IMR-90 (cell line): ENCODE measurements at regions of chr7 and their contacts with region 1.

Region 1: DNA sequence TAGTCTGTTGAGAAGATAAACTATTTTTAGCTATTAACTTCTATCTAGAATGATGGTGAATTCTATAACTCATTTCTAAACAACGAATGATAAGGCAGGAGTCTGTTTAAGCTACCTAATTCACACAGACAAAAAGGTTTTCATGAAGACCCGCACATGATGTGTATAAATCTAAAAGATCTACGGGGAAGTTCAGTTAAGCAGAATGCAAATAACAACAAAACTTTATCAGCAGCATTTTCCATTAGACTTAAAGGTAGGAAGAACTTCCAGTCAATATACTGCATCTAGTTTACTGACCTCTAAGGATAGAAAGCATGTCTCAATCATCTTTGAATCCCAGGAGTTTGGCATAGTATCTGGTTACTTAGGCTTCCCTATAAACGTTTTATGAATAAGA is 62.6 kb downstream of the CDK6 start:
- DNase-seq: no peak
- ATAC-seq: no peak
- H3K4me3 ChIP-seq: no peak overlapping the region
- H3K27ac ChIP-seq: no peak overlapping the region
- H3K4me1 ChIP-seq: peaks cover 8% of the 10 kb centered on the region; the same call in 1 of the 2 replicates
- H3K27me3 ChIP-seq: no peaks in the 10 kb centered on the region
- CTCF ChIP-seq: no peak
- POLR2A ChIP-seq: no peak
- RAD21 ChIP-seq: no peak

Region 2: GRCh38 chr7:92751902-92752901 is 21.6 kb before region 1 on chr7:
- CTCF ChIA-PET with region 1: no interaction called
- POLR2A ChIA-PET with region 1: no interaction called
- dilution Hi-C with region 1: no loop called
- in situ Hi-C with region 1: no loop called
- intact Hi-C with region 1: loop called (anchors 2 kb)
- DNase-seq: peak; percentile 98
- ATAC-seq: peak; percentile 82
- H3K4me3 ChIP-seq: no peak overlapping the region
- H3K27ac ChIP-seq: peak overlapping the region; percentile 43; the same call in 1 of the 2 replicates
- H3K4me1 ChIP-seq: peaks cover 25% of the 10 kb centered on the region
- H3K27me3 ChIP-seq: no peaks in the 10 kb centered on the region
- CTCF ChIP-seq: no peak
- POLR2A ChIP-seq: no peak
- RAD21 ChIP-seq: no peak